GM12878 (cell line): ENCODE measurements at regions of chr7 and their contacts with region 1.

Region 1: GRCh38 chr7:25894902-25895791 is 256.9 kb upstream of the NFE2L3 start:
- DNase-seq: peak; percentile 63
- ATAC-seq: peak; percentile 79
- H3K4me3 ChIP-seq: peak overlapping the region; percentile 58
- H3K27ac ChIP-seq: peak overlapping the region; percentile 59
- H3K4me1 ChIP-seq: peaks cover 29% of the 10 kb centered on the region
- H3K27me3 ChIP-seq: no peaks in the 10 kb centered on the region; a peak in 1 of 4 replicates
- CTCF ChIP-seq: peak; percentile 59 to 81 (median 77)
- EP300 ChIP-seq: peak; percentile 81 to 93
- POLR2A ChIP-seq: no peak
- RAD21 ChIP-seq: peak; percentile 53

Region 2: GRCh38 chr7:25835197-25835596 is 60.0 kb before region 1 on chr7:
- CTCF ChIA-PET with region 1: no interaction called
- POLR2A ChIA-PET with region 1: no interaction called
- RAD21 ChIA-PET with region 1: no interaction called
- SMC1A ChIA-PET with region 1: no interaction called
- in situ Hi-C with region 1: no loop called
- intact Hi-C with region 1: no loop called
- DNase-seq: no peak
- ATAC-seq: no peak
- H3K4me3 ChIP-seq: no peak overlapping the region
- H3K27ac ChIP-seq: no peak overlapping the region
- H3K4me1 ChIP-seq: no peaks in the 10 kb centered on the region
- H3K27me3 ChIP-seq: no peaks in the 10 kb centered on the region; a peak in 1 of 4 replicates
- CTCF ChIP-seq: no peak
- EP300 ChIP-seq: no peak
- POLR2A ChIP-seq: no peak
- RAD21 ChIP-seq: no peak

Region 3: GRCh38 chr7:25845464-25845863 is 49.7 kb before region 1 on chr7:
- CTCF ChIA-PET with region 1: no interaction called
- POLR2A ChIA-PET with region 1: no interaction called
- RAD21 ChIA-PET with region 1: no interaction called
- SMC1A ChIA-PET with region 1: no interaction called
- in situ Hi-C with region 1: no loop called
- intact Hi-C with region 1: no loop called
- DNase-seq: no peak
- ATAC-seq: no peak
- H3K4me3 ChIP-seq: no peak overlapping the region
- H3K27ac ChIP-seq: no peak overlapping the region
- H3K4me1 ChIP-seq: no peaks in the 10 kb centered on the region
- H3K27me3 ChIP-seq: no peaks in the 10 kb centered on the region; a peak in 1 of 4 replicates
- CTCF ChIP-seq: no peak
- EP300 ChIP-seq: no peak
- POLR2A ChIP-seq: no peak
- RAD21 ChIP-seq: no peak

Region 4: GRCh38 chr7:25908154-25908949 is 13.2 kb after region 1 on chr7:
- CTCF ChIA-PET with region 1: interaction called, 77 read pairs
- POLR2A ChIA-PET with region 1: interaction called, 5 read pairs
- RAD21 ChIA-PET with region 1: interaction called, 90 read pairs
- SMC1A ChIA-PET with region 1: interaction called, 108 read pairs
- in situ Hi-C with region 1: no loop called
- intact Hi-C with region 1: no loop called
- DNase-seq: no peak
- ATAC-seq: peak; percentile 73
- H3K4me3 ChIP-seq: no peak overlapping the region
- H3K27ac ChIP-seq: no peak overlapping the region
- H3K4me1 ChIP-seq: peaks cover 14% of the 10 kb centered on the region
- H3K27me3 ChIP-seq: no peaks in the 10 kb centered on the region
- CTCF ChIP-seq: no peak
- EP300 ChIP-seq: no peak
- POLR2A ChIP-seq: no peak
- RAD21 ChIP-seq: no peak

Region 5: DNA sequence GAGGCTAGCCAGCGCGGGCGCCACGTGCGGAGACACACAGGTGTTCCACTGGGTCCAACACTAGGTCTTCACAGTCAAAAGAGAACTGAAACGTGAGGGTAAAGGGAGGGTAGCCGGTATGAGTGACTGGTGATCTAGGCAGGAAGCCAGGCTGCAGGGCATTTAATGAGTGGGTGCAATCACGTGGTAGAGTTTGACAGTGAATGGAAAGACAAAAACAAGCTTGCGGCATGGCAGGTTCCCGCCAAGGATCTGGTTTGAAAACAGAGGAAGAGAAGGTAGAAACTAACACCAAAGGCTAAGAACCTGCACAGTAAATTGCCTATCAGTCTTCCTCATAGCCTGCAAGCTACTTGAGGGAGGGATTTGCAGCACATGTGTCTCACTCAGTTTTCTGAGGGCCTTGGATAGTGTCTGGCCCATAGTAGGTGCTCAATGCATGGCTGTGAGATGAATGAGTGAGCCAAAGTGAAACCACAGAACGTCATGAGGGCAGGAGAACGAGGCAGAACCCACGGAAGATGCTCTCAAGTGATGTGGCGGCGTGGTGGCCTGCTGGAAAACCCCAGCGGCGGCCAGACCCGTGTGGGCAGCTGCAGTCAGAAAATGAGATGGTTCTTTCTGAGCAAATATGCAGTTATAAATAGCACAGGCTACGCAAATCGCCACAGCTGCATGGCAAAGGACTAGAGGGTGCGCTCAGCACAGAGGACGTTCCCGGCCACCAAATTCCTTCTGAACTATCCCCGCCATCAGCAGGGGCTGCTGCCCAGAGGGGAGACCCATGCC is 73.3 kb after region 1 on chr7:
- CTCF ChIA-PET with region 1: interaction called, 83 read pairs
- POLR2A ChIA-PET with region 1: interaction called, 21 read pairs
- RAD21 ChIA-PET with region 1: interaction called, 46 read pairs
- SMC1A ChIA-PET with region 1: interaction called, 132 read pairs
- in situ Hi-C with region 1: no loop called
- intact Hi-C with region 1: loop called (anchors 2 kb)
- DNase-seq: peak; percentile 98
- ATAC-seq: peak; percentile 75
- H3K4me3 ChIP-seq: peak overlapping the region; percentile 31; the same call in 1 of the 2 replicates
- H3K27ac ChIP-seq: peak overlapping the region; percentile 91
- H3K4me1 ChIP-seq: peaks cover 54% of the 10 kb centered on the region
- H3K27me3 ChIP-seq: no peaks in the 10 kb centered on the region
- CTCF ChIP-seq: peak; percentile 5 to 23 (median 10); a peak in 1 of 6 replicates
- EP300 ChIP-seq: peak; percentile 94 to 95
- POLR2A ChIP-seq: peak; percentile 54; the same call in 1 of the 2 replicates
- RAD21 ChIP-seq: 0 out of 2 replicates have a peak, but pooled peaks have one; percentile 19

Region 6: GRCh38 chr7:26078437-26079336 is 183.5 kb after region 1 on chr7:
- CTCF ChIA-PET with region 1: interaction called, 11 read pairs
- POLR2A ChIA-PET with region 1: no interaction called
- RAD21 ChIA-PET with region 1: interaction called, 16 read pairs
- SMC1A ChIA-PET with region 1: interaction called, 12 read pairs
- in situ Hi-C with region 1: no loop called
- intact Hi-C with region 1: no loop called
- DNase-seq: peak; percentile 36
- ATAC-seq: peak; percentile 98
- H3K4me3 ChIP-seq: no peak overlapping the region
- H3K27ac ChIP-seq: no peak overlapping the region
- H3K4me1 ChIP-seq: no peaks in the 10 kb centered on the region
- H3K27me3 ChIP-seq: peaks cover 2 to 5% of the 10 kb centered on the region in 2 experiments; a peak in 1 of 4 replicates
- CTCF ChIP-seq: peak; percentile 50 to 61 (median 53); a peak in 5 of 6 replicates
- EP300 ChIP-seq: no peak
- POLR2A ChIP-seq: no peak
- RAD21 ChIP-seq: peak; percentile 60

Region 7: DNA sequence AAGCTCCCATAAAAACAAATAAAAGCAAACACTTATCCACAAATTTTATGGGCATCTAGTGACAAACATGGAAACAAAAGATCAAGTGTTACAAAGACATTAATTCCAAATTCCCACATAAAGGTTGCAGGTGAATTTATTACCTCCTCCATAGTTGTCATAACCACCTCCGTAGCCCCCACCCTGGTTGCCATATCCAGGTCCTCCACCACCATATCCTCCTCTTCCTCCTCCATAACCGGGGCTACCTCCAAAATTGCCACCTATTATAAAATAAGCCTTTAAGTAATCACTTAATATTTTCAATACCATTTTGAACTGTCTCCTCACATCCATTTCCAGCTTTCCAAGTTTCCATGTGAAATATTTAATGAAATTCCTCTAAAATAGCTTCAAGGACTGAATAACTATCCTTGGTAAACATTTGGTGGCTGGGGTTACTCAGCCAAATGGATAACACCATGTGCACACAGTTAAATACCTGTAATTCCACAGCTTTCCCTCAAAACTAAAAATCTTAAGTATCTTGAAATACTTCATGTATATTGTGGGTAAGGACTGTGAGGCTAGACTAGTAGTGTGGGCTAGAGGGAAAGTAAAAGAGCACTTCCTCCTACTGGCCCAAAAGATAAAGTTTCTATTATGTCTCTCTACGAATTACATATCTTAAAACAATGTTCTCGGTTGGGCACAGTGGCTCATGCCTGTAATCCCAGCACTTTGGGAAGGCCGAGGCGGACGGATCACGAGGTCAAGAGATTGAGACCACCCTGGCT is 298.5 kb after region 1 on chr7:
- CTCF ChIA-PET with region 1: interaction called, 37 read pairs
- POLR2A ChIA-PET with region 1: interaction called, 10 read pairs
- RAD21 ChIA-PET with region 1: interaction called, 12 read pairs
- SMC1A ChIA-PET with region 1: interaction called, 21 read pairs
- in situ Hi-C with region 1: loop called (anchors 5 kb)
- intact Hi-C with region 1: loop called (anchors 5 kb)
- DNase-seq: no peak
- ATAC-seq: peak; percentile 56
- H3K4me3 ChIP-seq: peak overlapping the region; percentile 49; the same call in 1 of the 2 replicates
- H3K27ac ChIP-seq: no peak overlapping the region
- H3K4me1 ChIP-seq: peaks cover 27% of the 10 kb centered on the region
- H3K27me3 ChIP-seq: no peaks in the 10 kb centered on the region
- CTCF ChIP-seq: no peak
- EP300 ChIP-seq: no peak
- POLR2A ChIP-seq: no peak
- RAD21 ChIP-seq: no peak

Region 8: GRCh38 chr7:26291699-26292538 is 396.8 kb after region 1 on chr7 and contains the start of gene SNX10:
- CTCF ChIA-PET with region 1: interaction called, 4 read pairs
- POLR2A ChIA-PET with region 1: no interaction called
- RAD21 ChIA-PET with region 1: interaction called, 7 read pairs
- SMC1A ChIA-PET with region 1: interaction called, 3 read pairs
- in situ Hi-C with region 1: no loop called
- intact Hi-C with region 1: loop called (anchors 5 kb)
- DNase-seq: no peak
- ATAC-seq: peak; percentile 80
- H3K4me3 ChIP-seq: peak within 1 kb of the TSS; percentile 98
- H3K27ac ChIP-seq: peak within 1 kb of the TSS; percentile 87
- H3K4me1 ChIP-seq: peaks cover 16% of the 10 kb centered on the region
- H3K27me3 ChIP-seq: no peaks in the 10 kb centered on the region
- CTCF ChIP-seq: peak; percentile 54 to 84 (median 54); a peak in 5 of 6 replicates
- EP300 ChIP-seq: no peak
- POLR2A ChIP-seq: peak; percentile 66; the same call in 1 of the 2 replicates
- RAD21 ChIP-seq: peak; percentile 67
- polyA plus RNA-seq, gene SNX10: 22.9 to 29.7 TPM

Region 9: DNA sequence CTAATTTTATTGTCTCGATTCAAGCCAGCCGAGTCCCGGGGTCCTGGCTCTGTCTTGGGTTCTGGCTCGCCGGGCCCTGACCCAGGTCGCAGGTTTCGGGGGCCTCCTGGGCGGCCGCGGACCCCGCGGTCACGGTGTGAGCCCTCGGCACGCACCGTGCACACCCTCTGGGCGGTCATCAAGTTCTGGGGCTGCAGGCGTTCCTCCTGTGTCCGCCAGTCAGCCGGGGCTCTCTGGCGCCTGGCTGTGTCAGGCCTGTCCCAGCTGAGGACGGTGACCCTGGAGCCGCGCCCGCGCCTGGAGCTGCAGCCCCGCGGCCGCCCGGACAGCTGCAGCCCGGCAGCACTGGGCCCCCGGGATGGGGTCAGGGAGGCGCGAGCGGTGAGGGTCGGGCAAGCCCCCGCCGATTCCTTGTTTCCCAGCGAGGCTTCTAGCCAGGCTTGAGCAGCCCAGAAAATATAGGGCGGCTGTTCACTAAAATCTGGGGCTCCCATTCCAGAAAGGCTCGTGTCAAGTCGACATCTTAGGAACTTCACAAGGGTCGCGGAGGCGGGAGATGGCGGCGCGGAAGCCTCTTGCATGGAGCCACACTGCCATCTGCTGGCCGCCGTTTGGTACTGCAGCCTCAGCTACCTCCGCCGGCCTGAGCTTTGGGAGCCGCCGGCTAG is 1265.5 kb after region 1 on chr7:
- CTCF ChIA-PET with region 1: interaction called, 9 read pairs
- POLR2A ChIA-PET with region 1: no interaction called
- RAD21 ChIA-PET with region 1: interaction called, 10 read pairs
- SMC1A ChIA-PET with region 1: interaction called, 5 read pairs
- in situ Hi-C with region 1: no loop called
- intact Hi-C with region 1: loop called (anchors 5 kb)
- DNase-seq: peak; percentile 23
- ATAC-seq: peak; percentile 89
- H3K4me3 ChIP-seq: peak overlapping the region; percentile 72
- H3K27ac ChIP-seq: no peak overlapping the region
- H3K4me1 ChIP-seq: no peaks in the 10 kb centered on the region
- H3K27me3 ChIP-seq: peaks cover 17 to 38% of the 10 kb centered on the region in 2 experiments
- CTCF ChIP-seq: peak; percentile 87 to 98 (median 93)
- EP300 ChIP-seq: no peak
- POLR2A ChIP-seq: no peak
- RAD21 ChIP-seq: peak; percentile 70